Gastrocnemius medialis (tissue), 4 donors: ENCODE measurements at regions of chr11 and their contacts with region 1.

Region 1: DNA sequence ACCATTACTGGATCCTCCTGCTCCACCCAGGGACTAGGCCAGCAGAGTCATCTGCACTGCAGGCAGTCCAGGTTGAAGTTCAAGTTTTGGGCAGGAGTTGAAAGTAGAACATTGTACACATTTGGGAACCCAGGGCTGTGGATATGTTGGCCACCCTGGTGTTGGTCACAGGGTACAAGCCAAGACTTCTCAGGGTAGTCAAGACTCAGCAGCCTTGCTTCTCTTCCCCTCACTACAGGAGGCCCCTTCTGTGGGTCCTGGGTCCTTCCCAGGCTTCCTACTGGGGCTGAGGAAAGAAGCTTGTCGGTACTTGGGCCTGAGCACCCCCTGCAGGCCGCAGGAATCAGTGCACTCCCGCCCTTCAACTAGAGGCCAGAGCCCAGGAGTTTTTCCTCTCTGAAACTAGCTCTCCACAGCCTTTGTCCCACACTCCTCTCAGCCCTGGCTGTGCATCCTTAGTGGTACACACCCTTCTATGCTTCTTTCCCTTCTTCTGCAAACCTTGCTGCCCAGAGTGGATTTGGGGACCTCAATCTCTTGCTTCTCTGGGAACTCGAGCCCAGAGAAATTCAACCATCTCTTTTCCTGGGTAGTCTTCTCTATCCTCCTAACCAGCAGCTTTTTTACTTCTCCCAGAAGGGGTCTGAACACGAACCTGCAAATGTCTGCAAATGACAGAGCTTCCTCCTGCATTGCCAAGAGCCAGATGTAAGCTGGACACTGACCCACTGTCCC is 2.6 kb upstream of the HPX start:
- DNase-seq: peak; percentile 10 to 33
- ATAC-seq: peak; percentile 50 to 88
- H3K4me3 ChIP-seq: no peak overlapping the region
- H3K27ac ChIP-seq: no peak overlapping the region
- H3K4me1 ChIP-seq: no peaks in the 10 kb centered on the region
- H3K27me3 ChIP-seq: no peaks in the 10 kb centered on the region
- CTCF ChIP-seq: peak; percentile 62 to 81 (median 71)
- POLR2A ChIP-seq: no peak

Region 2: DNA sequence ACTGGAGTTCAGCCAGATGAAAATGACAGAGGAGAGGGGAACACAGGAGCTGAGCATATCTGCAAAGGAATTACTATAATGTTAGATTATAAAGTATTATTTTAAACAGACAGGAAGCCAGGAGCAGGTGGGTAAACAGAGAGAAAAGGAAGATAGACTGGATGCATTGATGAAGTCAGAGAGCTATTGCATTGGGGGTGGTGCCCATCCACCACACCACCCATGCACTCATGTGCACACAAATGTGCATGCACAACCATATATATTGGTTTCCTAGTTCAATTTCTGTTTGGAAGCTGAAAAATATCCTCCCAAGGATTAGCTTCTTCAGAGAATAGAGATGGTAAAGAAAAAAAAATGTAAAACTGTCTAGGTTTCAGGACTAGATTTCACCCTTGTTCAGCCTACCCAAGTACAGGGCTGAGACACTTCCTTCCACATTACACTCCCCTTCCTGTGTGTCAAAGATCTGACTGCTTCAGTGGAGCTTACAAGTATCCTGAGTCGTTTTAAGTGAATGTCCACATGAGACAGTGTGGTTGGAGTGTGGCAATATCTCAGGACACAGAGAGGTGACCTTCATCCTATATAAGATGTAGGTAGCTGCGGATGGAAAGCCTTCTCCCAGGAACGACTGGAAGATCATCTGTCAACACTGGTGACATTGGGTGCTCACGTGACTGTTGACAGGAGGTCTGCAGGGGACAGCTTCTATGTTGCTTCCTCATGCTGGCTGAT is 65.4 kb before region 1 on chr11:
- in situ Hi-C with region 1: loop called (anchors 5 to 10 kb)
- intact Hi-C with region 1: loop called (anchors 1 kb)
- DNase-seq: no peak
- ATAC-seq: peak in 1 of 2 donors; percentile 40
- H3K4me3 ChIP-seq: no peak overlapping the region
- H3K27ac ChIP-seq: peak overlapping the region in 1 of 4 donors; percentile 3
- H3K4me1 ChIP-seq: no peaks in the 10 kb centered on the region
- H3K27me3 ChIP-seq: no peaks in the 10 kb centered on the region
- CTCF ChIP-seq: no peak
- POLR2A ChIP-seq: no peak

Region 3: GRCh38 chr11:6419009-6419631 is 24.3 kb before region 1 on chr11 and contains the start of gene APBB1:
- in situ Hi-C with region 1: no loop called
- intact Hi-C with region 1: loop called (anchors 2 kb)
- DNase-seq: peak; percentile 22 to 44
- ATAC-seq: peak; percentile 90 to 91
- H3K4me3 ChIP-seq: peak within 1 kb of the TSS; percentile 69 to 99 (median 92)
- H3K27ac ChIP-seq: peak within 1 kb of the TSS; percentile 78 to 92 (median 86)
- H3K4me1 ChIP-seq: peaks cover 14 to 15% of the 10 kb centered on the region in 2 donors
- H3K27me3 ChIP-seq: no peaks in the 10 kb centered on the region
- CTCF ChIP-seq: peak in 1 of 5 experiments; percentile 6
- POLR2A ChIP-seq: peak; percentile 42 to 48
- total RNA-seq, gene APBB1: 18.5 to 49.2 (median 46.2) TPM

Region 4: GRCh38 chr11:6505577-6506240 is 62.3 kb after region 1 on chr11:
- in situ Hi-C with region 1: no loop called
- intact Hi-C with region 1: loop called (anchors 5 kb)
- DNase-seq: no peak
- ATAC-seq: peak in 1 of 2 donors; percentile 36
- H3K4me3 ChIP-seq: no peak overlapping the region
- H3K27ac ChIP-seq: no peak overlapping the region
- H3K4me1 ChIP-seq: no peaks in the 10 kb centered on the region
- H3K27me3 ChIP-seq: no peaks in the 10 kb centered on the region
- CTCF ChIP-seq: peak; percentile 43 to 72 (median 53)
- POLR2A ChIP-seq: no peak

Region 5: GRCh38 chr11:6516865-6517264 is 73.4 kb after region 1 on chr11:
- in situ Hi-C with region 1: no loop called
- intact Hi-C with region 1: no loop called
- DNase-seq: no peak
- ATAC-seq: no peak
- H3K4me3 ChIP-seq: no peak overlapping the region
- H3K27ac ChIP-seq: no peak overlapping the region
- H3K4me1 ChIP-seq: no peaks in the 10 kb centered on the region
- H3K27me3 ChIP-seq: no peaks in the 10 kb centered on the region
- CTCF ChIP-seq: no peak
- POLR2A ChIP-seq: no peak